HepG2 (cell line): ENCODE measurements at regions of chr12 and their contacts with region 1.

Region 1: GRCh38 chr12:98516184-98516873 is 939 bp downstream of the TMPO start:
- DNase-seq: peak; percentile 88
- ATAC-seq: peak; percentile 52
- H3K4me3 ChIP-seq: peak overlapping the region; percentile 82 to 94 (median 84)
- H3K27ac ChIP-seq: peak overlapping the region; percentile 99
- H3K4me1 ChIP-seq: peaks cover 41% of the 10 kb centered on the region
- H3K27me3 ChIP-seq: no peaks in the 10 kb centered on the region; a peak in 1 of 5 replicates
- CTCF ChIP-seq: peak; percentile 69
- EP300 ChIP-seq: no peak; a peak in 1 of 4 replicates
- POLR2A ChIP-seq: peak; percentile 17 to 45; a peak in 1 of 4 replicates
- RAD21 ChIP-seq: peak; percentile 58

Region 2: GRCh38 chr12:98503592-98504367 is 12.5 kb before region 1 on chr12:
- CTCF ChIA-PET with region 1: no interaction called
- POLR2A ChIA-PET with region 1: interaction called, 11 read pairs
- in situ Hi-C with region 1: no loop called
- intact Hi-C with region 1: loop called (anchors 1 kb)
- DNase-seq: peak; percentile 84
- ATAC-seq: peak; percentile 58
- H3K4me3 ChIP-seq: peak overlapping the region; percentile 72 to 77 (median 77)
- H3K27ac ChIP-seq: peak overlapping the region; percentile 99
- H3K4me1 ChIP-seq: peaks cover 39% of the 10 kb centered on the region
- H3K27me3 ChIP-seq: no peaks in the 10 kb centered on the region; a peak in 1 of 5 replicates
- CTCF ChIP-seq: peak; percentile 38
- EP300 ChIP-seq: peak in 1 of 2 experiments; percentile 25; a peak in 3 of 4 replicates
- POLR2A ChIP-seq: peak; percentile 65 to 74
- RAD21 ChIP-seq: peak; percentile 4; the same call in 1 of the 2 replicates

Region 3: GRCh38 chr12:98532681-98533304 is 16.5 kb after region 1 on chr12:
- CTCF ChIA-PET with region 1: no interaction called
- POLR2A ChIA-PET with region 1: no interaction called
- in situ Hi-C with region 1: no loop called
- intact Hi-C with region 1: loop called (anchors 2 kb)
- DNase-seq: peak; percentile 59
- ATAC-seq: peak; percentile 81
- H3K4me3 ChIP-seq: no peak overlapping the region
- H3K27ac ChIP-seq: no peak overlapping the region
- H3K4me1 ChIP-seq: peaks cover 17% of the 10 kb centered on the region
- H3K27me3 ChIP-seq: no peaks in the 10 kb centered on the region
- CTCF ChIP-seq: peak; percentile 45
- EP300 ChIP-seq: no peak
- POLR2A ChIP-seq: no peak
- RAD21 ChIP-seq: peak; percentile 18; the same call in 1 of the 2 replicates